ENCODE measurements at regions of chr11 and their contacts with region 1.

Region 1: DNA sequence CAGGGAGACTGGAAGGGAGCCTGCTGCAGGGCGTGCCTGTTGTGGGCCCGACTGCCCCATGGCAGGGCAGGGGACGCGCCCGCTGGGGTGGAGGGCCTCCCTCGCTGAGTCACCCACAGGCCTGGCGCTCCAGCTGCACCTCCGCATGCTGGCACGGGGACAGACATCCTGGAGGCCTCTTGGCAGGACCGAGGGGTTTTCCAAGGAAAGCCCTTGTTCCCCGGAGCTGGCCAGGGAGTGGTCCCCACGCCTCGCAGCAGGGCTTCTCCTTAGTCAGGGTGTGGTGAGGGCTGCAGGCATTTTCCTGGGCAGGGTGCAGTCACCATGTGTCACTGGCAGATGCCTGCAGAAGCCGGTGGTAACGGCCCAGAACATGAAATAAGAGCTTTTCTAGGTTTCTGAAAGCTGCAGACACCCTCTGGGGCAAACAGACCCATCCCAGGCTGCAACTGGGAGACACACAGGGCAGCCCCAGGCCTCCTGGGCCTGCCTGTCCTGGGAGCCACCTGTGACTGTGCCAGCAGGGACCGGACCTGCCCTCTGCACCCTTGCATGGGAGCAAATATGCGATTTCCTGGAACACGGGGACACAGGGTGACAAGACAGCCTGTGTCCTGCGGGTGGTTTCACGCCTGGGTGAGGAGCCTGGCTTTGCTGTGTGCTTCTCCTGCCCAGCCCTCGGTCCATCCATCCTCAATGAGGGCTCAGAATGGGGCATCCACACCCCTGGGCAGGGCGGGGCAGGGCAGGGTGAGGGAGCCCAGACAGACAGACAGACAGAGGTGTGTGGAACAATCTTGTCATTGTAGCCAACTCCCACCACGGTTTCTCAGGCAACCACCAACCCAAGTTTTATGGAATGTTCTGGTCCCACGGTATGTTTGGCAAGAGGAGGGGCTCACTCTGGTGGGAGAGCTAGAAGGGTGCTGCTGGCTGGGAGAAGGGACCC is 43.2 kb upstream of the FADD start:
- DNase-seq: peak; percentile 99
- H3K4me3 ChIP-seq: no peak overlapping the region
- H3K27ac ChIP-seq: peak overlapping the region; percentile 86
- H3K4me1 ChIP-seq: peaks cover 56% of the 10 kb centered on the region
- H3K27me3 ChIP-seq: no peaks in the 10 kb centered on the region
- CTCF ChIP-seq: no peak

Region 2: GRCh38 chr11:70140711-70141485 is 19.0 kb before region 1 on chr11:
- CTCF ChIA-PET with region 1: no interaction called
- dilution Hi-C with region 1: no loop called
- in situ Hi-C with region 1: no loop called
- intact Hi-C with region 1: loop called (anchors 1 kb)
- DNase-seq: no peak
- H3K4me3 ChIP-seq: no peak overlapping the region
- H3K27ac ChIP-seq: peak overlapping the region; percentile 68
- H3K4me1 ChIP-seq: peaks cover 39% of the 10 kb centered on the region
- H3K27me3 ChIP-seq: no peaks in the 10 kb centered on the region
- CTCF ChIP-seq: no peak